Activated B cell treated with CpG ODN at 0.5 μM for 24 hours (primary cell): ENCODE measurements at regions of chr19 and their contacts with region 1.

Region 1: DNA sequence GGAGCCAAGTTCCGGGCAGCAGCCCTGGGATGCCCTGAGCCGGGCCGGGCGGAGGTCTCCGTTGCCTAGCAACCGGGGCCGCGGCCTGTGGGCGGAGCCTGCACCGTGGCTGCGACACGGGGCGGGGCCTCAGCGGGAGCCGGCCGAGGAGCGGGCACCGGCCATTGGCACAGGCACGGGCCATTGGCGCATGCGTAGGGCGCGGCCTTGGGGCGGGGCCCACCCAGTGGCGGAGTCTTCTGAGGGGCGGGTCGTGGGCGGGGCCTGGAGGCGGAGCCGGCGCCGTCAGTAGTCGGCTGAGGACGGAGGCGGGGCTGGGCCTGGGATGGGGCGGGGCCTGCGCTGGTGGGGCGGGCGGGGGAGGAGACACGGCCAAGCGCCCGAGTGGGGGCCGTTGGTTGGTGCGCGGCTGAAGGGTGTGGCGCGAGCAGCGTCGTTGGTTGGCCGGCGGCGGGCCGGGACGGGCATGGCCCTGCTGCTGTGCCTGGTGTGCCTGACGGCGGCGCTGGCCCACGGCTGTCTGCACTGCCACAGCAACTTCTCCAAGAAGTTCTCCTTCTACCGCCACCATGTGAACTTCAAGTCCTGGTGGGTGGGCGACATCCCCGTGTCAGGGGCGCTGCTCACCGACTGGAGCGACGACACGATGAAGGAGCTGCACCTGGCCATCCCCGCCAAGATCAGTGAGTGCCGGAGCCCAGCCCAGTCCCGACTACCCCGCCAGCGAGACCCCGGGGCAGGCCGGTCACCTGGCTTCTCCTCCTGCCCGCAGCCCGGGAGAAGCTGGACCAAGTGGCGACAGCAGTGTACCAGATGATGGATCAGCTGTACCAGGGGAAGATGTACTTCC is at the start of gene IZUMO4:
- DNase-seq: peak; percentile 99
- ATAC-seq: peak; percentile 76
- H3K4me3 Mint-ChIP-seq: peak within 1 kb of the TSS; percentile 93
- H3K27ac Mint-ChIP-seq: peak within 1 kb of the TSS; percentile 95
- H3K4me1 Mint-ChIP-seq: peaks cover 38% of the 10 kb centered on the region
- H3K27me3 Mint-ChIP-seq: no peaks in the 10 kb centered on the region
- CTCF ChIP-seq: no peak
- total RNA-seq, gene IZUMO4: 73.0 and 78.6 TPM in 2 replicates

Region 2: GRCh38 chr19:1905071-1905862 is 191.4 kb before region 1 on chr19 and contains the starts of genes ADAT3 and SCAMP4:
- CTCF ChIA-PET with region 1: no interaction called
- POLR2A ChIA-PET with region 1: interaction called, 7 read pairs
- intact Hi-C with region 1: loop called (anchors 1 kb)
- DNase-seq: peak; percentile 94
- ATAC-seq: peak; percentile 92
- H3K4me3 Mint-ChIP-seq: peak within 1 kb of the TSS; percentile 91
- H3K27ac Mint-ChIP-seq: peak within 1 kb of the TSS; percentile 94
- H3K4me1 Mint-ChIP-seq: peaks cover 59% of the 10 kb centered on the region
- H3K27me3 Mint-ChIP-seq: no peaks in the 10 kb centered on the region
- CTCF ChIP-seq: no peak
- total RNA-seq, gene ADAT3: 8.5 and 14.1 TPM in 2 replicates
- total RNA-seq, gene SCAMP4: 47.6 and 59.7 TPM in 2 replicates

Region 3: DNA sequence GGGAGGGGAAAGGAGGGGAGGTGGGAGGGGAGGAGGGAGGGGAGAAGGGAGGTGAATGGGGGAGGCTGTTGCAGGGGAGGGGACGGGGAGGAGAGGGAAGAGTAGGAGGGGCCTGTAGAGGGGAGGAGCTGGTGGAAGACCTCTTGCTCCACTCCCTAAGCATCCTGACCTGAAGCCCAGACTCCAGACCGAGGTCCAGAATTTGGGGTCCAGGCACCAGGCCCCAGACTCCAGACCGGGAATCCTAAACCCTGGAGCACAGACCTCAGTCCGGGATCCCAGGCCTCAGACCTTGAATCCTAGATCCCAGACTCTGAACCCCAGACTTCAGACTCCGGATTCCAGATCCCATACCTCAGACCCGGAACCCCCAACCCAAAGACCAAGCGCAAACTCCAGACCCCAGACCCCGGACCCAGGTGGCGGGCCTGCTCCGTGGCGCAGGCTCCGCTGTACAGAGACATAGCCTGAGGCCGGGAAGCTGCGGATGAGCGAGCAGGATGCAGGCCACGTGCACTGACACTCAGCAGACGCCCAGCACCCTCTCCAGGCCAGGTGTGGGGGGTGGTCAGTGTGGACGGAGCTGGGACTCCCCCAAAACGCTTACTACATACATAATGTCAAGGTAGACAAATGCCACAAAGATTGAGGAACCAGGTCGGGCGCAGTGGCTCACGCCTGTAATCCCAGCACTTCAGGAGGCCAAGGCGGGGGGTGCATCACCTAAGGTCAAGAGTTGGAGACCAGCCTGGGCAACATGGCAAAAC is 80.5 kb before region 1 on chr19:
- CTCF ChIA-PET with region 1: interaction called, 3 read pairs
- POLR2A ChIA-PET with region 1: interaction called, 11 read pairs
- intact Hi-C with region 1: loop called (anchors 1 kb)
- DNase-seq: no peak
- ATAC-seq: peak; percentile 73
- H3K4me3 Mint-ChIP-seq: peak overlapping the region; percentile 60
- H3K27ac Mint-ChIP-seq: peak overlapping the region; percentile 56
- H3K4me1 Mint-ChIP-seq: peaks cover 29% of the 10 kb centered on the region
- H3K27me3 Mint-ChIP-seq: no peaks in the 10 kb centered on the region
- CTCF ChIP-seq: no peak

Region 4: DNA sequence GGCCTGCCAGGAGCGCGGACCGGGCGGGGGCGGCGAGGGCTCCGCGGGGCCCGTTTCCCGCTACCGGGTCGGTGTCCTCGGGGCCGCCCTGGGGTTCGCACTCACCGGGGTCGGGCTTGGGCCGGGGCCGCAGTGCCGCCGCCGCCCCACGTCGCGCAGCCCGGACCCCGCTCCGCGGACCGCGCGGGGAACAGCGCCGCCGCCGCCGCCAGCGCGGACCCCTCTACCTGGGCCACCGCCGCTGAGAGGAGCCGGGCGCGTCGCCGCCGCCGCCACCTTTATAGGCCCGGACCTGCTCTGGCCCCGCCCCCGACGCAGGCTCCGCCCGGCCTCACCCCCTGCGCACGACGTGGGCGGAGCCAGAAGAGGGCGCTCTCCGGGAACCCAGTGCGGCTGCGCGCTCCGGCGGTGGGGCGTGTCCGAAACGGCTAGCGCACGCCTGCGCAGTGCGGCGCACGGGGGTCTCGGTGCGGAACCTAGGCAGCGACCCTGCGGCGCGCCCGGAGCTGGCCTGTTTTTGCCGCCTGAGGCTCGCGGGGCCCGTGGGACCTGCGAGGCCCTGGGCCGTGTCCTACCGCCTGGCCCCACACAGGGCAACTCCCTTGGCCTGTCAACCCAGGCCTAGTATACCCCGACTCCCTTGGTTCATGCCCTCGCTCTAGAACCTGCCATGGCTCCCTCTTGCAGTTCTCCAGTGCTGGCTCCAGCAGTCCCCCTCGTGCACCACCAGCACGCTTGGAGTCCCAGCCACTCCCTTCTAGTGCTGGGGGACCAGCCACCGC is 45.5 kb before region 1 on chr19 and contains the start of gene MKNK2:
- CTCF ChIA-PET with region 1: interaction called, 12 read pairs
- POLR2A ChIA-PET with region 1: interaction called, 2,723 read pairs
- intact Hi-C with region 1: loop called (anchors 1 kb)
- DNase-seq: peak; percentile 99
- ATAC-seq: peak; percentile 61
- H3K4me3 Mint-ChIP-seq: peak within 1 kb of the TSS; percentile 93
- H3K27ac Mint-ChIP-seq: peak within 1 kb of the TSS; percentile 97
- H3K4me1 Mint-ChIP-seq: peaks cover 77% of the 10 kb centered on the region
- H3K27me3 Mint-ChIP-seq: no peaks in the 10 kb centered on the region
- CTCF ChIP-seq: no peak
- total RNA-seq, gene MKNK2: 1,134 and 1,197 TPM in 2 replicates

Region 5: DNA sequence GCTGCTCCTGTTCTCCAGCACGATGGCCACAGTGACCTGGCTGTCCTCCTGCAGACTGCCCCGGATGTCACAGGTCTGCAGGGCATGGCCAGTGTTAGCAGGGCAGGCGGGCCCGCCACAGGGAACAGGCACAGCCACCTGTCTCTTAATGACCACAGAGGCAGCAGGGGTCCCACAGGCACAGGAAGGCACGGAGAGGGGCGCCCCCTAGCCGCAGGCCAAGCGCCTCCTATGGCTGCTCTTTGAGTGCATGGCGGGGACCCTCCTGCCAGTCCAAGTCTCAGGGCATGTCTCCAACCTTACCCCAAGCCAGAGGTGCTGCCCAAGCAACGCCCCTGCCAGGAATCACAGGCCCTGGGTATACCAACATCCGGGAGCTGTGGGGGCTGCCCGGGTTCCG is 14.1 kb after region 1 on chr19:
- CTCF ChIA-PET with region 1: interaction called, 3 read pairs
- POLR2A ChIA-PET with region 1: interaction called, 8 read pairs
- intact Hi-C with region 1: loop called (anchors 1 kb)
- DNase-seq: no peak
- ATAC-seq: no peak
- H3K4me3 Mint-ChIP-seq: no peak overlapping the region
- H3K27ac Mint-ChIP-seq: no peak overlapping the region
- H3K4me1 Mint-ChIP-seq: peaks cover 3% of the 10 kb centered on the region
- H3K27me3 Mint-ChIP-seq: no peaks in the 10 kb centered on the region
- CTCF ChIP-seq: no peak

Region 6: GRCh38 chr19:2315818-2316353 is 219.2 kb after region 1 on chr19:
- CTCF ChIA-PET with region 1: no interaction called
- POLR2A ChIA-PET with region 1: no interaction called
- intact Hi-C with region 1: loop called (anchors 10 kb)
- DNase-seq: peak; percentile 54
- ATAC-seq: peak; percentile 74
- H3K4me3 Mint-ChIP-seq: peak overlapping the region; percentile 59
- H3K27ac Mint-ChIP-seq: peak overlapping the region; percentile 82
- H3K4me1 Mint-ChIP-seq: peaks cover 55% of the 10 kb centered on the region
- H3K27me3 Mint-ChIP-seq: no peaks in the 10 kb centered on the region
- CTCF ChIP-seq: no peak

Region 7: GRCh38 chr19:3606690-3607289 is 1510.1 kb after region 1 on chr19 and contains the start of gene TBXA2R:
- CTCF ChIA-PET with region 1: no interaction called
- POLR2A ChIA-PET with region 1: interaction called, 12 read pairs
- intact Hi-C with region 1: no loop called
- DNase-seq: peak; percentile 74
- ATAC-seq: peak; percentile 63
- H3K4me3 Mint-ChIP-seq: peak within 1 kb of the TSS; percentile 65
- H3K27ac Mint-ChIP-seq: no peak within 1 kb of the TSS
- H3K4me1 Mint-ChIP-seq: peaks cover 18% of the 10 kb centered on the region
- H3K27me3 Mint-ChIP-seq: peaks cover 1% of the 10 kb centered on the region
- CTCF ChIP-seq: no peak
- total RNA-seq, gene TBXA2R: 0.39 and 0.47 TPM in 2 replicates